ENCODE measurements at regions of chr2 and their contacts with region 1.

Region 1: DNA sequence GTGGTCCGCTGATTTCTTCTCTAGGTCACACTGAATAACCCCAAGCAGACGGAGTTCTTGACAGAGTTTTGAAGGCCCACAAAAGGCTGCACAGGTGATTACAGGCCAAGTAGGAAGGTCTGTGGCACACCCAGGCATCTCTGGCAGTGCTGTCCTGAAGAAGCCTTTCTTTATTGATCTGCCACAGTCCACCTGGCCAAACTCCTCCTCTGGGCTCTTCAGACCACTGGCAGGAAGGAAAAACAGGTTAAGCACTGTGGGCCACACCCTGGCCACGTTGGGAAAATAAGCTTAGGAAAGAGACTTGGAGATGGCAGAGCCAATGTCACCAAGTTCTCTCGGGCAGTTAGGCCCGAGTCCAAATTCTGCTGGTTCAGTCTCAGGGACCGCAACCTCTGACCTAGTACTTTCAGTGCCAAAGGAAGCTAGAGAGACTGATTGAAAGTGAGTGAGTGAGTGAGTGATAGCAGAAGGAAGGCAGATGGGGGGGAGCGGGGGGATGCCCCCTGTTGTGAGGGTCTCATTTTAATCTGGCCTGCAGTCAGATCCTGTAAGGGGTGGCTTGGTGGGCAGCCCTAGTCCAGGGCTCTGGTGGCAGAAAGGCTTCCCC is 102.9 kb downstream of the TGFA start:
- DNase-seq: no peak
- ATAC-seq: no peak
- H3K4me3 ChIP-seq: no peak overlapping the region
- H3K27ac ChIP-seq: no peak overlapping the region
- H3K4me1 ChIP-seq: no peaks in the 10 kb centered on the region
- H3K27me3 ChIP-seq: peaks cover 8% of the 10 kb centered on the region
- CTCF ChIP-seq: no peak

Region 2: DNA sequence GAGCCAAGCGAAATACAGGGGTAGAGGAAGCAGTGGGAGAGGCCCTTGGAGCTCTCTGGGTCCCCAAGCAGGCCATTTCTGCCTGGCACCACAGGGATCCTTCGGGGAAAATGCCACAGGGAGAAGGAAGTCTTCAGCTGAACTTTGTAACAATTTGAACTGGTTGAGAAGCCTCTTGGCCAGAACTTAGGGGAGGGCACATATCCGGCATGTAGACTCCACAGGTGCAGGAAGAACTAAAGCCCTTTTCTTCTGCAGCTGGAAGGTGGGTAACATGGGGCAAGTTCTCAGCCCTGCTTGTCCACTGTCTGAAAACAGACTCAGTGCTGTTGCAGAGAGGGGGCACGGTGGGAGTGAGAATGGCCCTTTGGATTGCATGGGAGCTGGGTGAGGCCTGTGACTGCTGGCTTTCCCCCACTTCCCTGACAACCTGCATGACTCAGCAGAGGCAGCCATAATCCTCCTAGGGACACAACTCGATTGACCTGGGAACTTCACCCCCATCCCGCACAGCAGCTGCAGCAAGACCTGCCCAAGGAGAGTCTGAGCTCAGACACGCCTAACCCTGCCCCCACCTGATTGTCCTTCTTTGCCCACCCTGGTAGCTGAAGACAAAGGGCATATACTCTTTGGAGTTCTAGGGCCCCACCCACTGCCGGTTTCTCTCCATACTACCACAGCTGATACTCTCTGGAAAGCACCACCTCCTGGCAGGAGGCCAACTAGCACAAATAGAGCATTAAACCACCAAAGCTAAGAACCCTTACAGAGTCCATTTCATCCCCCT is 47.3 kb before region 1 on chr2:
- CTCF ChIA-PET with region 1: no interaction called
- POLR2A ChIA-PET with region 1: no interaction called
- in situ Hi-C with region 1: no loop called
- intact Hi-C with region 1: no loop called
- DNase-seq: no peak
- ATAC-seq: no peak
- H3K4me3 ChIP-seq: no peak overlapping the region
- H3K27ac ChIP-seq: no peak overlapping the region
- H3K4me1 ChIP-seq: no peaks in the 10 kb centered on the region
- H3K27me3 ChIP-seq: peaks cover 7% of the 10 kb centered on the region
- CTCF ChIP-seq: no peak

Region 3: DNA sequence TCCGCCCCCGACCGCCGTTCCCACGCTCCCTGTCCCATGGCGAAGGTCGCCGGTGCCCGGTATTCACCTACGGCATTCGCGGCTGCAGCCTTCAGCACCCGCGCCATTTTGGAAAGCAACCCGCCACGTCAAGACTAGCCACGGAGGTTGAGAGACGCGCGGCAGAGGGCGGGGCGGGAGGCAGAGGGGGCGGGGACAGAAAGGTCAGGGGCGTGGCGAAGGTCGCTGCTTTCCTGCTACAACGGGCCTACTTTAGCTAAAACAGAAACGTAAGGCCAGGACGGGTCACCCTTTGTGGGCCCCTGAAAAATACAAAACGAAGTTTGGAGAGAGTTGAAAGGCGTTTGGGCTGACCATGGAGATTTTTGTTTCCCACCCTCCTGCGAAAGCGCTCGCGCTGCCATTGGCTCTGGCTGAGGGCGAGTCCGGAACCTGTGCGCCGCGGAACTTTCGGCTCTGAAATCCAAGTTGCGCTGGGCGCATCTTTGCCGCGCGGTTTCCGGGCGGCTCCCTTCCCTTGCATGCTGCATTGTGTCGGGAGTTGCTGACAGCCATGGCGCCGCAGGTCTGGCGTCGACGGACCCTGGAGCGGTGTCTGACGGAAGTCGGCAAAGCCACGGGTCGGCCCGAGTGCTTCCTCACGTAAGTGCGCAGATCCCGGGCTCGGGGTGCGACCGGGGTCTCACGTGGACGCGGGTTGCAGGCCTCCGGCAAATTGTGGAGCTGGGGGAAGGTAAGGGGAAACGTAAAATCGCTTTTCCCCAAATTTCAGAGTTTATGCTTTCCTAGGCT is 679.6 kb after region 1 on chr2 and contains the starts of genes MCEE and MPHOSPH10:
- CTCF ChIA-PET with region 1: no interaction called
- POLR2A ChIA-PET with region 1: interaction called, 19 read pairs
- in situ Hi-C with region 1: no loop called
- intact Hi-C with region 1: no loop called
- DNase-seq: peak; percentile 81
- ATAC-seq: peak; percentile 99
- H3K4me3 ChIP-seq: peak within 1 kb of the TSS; percentile 98 to 99
- H3K27ac ChIP-seq: peak within 1 kb of the TSS; percentile 91
- H3K4me1 ChIP-seq: peaks cover 10% of the 10 kb centered on the region
- H3K27me3 ChIP-seq: no peaks in the 10 kb centered on the region
- CTCF ChIP-seq: no peak
- total RNA-seq, gene MCEE: 4.8 TPM
- total RNA-seq, gene MPHOSPH10: 34.1 TPM

Measured in Panc1 (cell line).